Heart left ventricle (tissue), 16 donors: ENCODE measurements at regions of chr1 and their contacts with region 1.

Region 1: DNA sequence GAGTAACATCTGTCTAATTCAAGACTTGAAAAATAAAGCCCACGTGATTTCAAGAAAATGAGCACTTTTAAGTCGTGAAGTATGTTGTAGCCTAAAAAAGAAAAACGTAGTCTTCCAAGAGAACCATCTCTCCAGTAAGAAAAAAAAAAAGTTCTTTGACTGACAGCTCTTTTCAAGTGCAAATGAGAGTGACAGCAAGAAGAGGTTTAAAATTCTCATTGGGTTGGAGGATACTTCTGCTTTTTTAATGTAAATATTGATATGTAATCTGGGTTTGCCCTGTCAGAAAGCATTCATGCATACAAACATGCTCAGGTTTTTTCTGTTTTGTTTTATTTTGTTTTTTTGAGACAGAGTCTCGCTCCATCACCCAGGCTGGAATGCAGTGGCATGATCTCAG is 32.3 kb upstream of the PRDM2 start:
- DNase-seq: no peak
- ATAC-seq: no peak
- H3K4me3 ChIP-seq: no peak overlapping the region
- H3K27ac ChIP-seq: no peak overlapping the region
- H3K4me1 ChIP-seq: peaks cover 0 to 7% (median 0%) of the 10 kb centered on the region in 12 donors
- H3K27me3 ChIP-seq: peaks cover 0 to 6% (median 0%) of the 10 kb centered on the region in 9 donors
- CTCF ChIP-seq: no peak
- POLR2A ChIP-seq: no peak

Region 2: GRCh38 chr1:13813398-13814012 is 145.8 kb after region 1 on chr1:
- intact Hi-C with region 1: loop called in 8 of 10 experiments (anchors 5 to 10 kb)
- DNase-seq: peak in 2 of 5 donors; percentile 50 to 79
- ATAC-seq: peak in 1 of 4 donors; percentile 30
- H3K4me3 ChIP-seq: no peak overlapping the region
- H3K27ac ChIP-seq: no peak overlapping the region
- H3K4me1 ChIP-seq: peaks cover 0 to 12% (median 1%) of the 10 kb centered on the region in 12 donors
- H3K27me3 ChIP-seq: no peaks in the 10 kb centered on the region
- CTCF ChIP-seq: peak in 11 of 12 donors; percentile 15 to 69 (median 51)
- POLR2A ChIP-seq: no peak

Region 3: DNA sequence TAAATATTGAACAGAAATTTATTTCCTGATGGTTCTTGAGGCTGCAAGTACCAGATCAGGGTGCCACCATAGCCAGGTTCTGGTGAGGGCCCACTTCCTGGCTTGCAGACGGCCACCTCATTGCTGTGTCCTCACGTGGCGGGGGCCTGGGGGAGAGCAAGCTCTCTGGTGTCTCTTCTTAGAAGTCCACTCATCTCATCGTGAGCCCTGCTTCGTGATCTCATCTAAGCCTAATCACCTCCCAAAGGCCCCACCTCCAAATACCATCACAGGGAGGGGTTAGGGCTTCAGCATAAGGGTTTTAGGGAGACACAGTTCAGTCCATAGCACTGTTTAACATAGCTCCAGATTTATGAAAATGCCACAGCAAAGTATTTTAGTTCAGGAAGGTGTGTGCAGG is 152.0 kb after region 1 on chr1:
- intact Hi-C with region 1: loop called in 9 of 10 experiments (anchors 5 to 10 kb)
- DNase-seq: peak in 1 of 5 donors; percentile 15
- ATAC-seq: no peak
- H3K4me3 ChIP-seq: no peak overlapping the region
- H3K27ac ChIP-seq: no peak overlapping the region
- H3K4me1 ChIP-seq: no peaks in the 10 kb centered on the region
- H3K27me3 ChIP-seq: no peaks in the 10 kb centered on the region
- CTCF ChIP-seq: no peak
- POLR2A ChIP-seq: no peak